ENCODE measurements at regions of chr12 and their contacts with region 1.

Region 1: GRCh38 chr12:12081836-12082497 is 11.2 kb downstream of the BCL2L14 start:
- DNase-seq: no peak
- H3K4me3 ChIP-seq: no peak overlapping the region
- H3K27ac ChIP-seq: no peak overlapping the region
- H3K4me1 ChIP-seq: no peaks in the 10 kb centered on the region
- H3K27me3 ChIP-seq: no peaks in the 10 kb centered on the region
- CTCF ChIP-seq: peak in 2 of 3 donors; percentile 15 to 34
- EP300 ChIP-seq: no peak
- POLR2A ChIP-seq: no peak

Region 2: DNA sequence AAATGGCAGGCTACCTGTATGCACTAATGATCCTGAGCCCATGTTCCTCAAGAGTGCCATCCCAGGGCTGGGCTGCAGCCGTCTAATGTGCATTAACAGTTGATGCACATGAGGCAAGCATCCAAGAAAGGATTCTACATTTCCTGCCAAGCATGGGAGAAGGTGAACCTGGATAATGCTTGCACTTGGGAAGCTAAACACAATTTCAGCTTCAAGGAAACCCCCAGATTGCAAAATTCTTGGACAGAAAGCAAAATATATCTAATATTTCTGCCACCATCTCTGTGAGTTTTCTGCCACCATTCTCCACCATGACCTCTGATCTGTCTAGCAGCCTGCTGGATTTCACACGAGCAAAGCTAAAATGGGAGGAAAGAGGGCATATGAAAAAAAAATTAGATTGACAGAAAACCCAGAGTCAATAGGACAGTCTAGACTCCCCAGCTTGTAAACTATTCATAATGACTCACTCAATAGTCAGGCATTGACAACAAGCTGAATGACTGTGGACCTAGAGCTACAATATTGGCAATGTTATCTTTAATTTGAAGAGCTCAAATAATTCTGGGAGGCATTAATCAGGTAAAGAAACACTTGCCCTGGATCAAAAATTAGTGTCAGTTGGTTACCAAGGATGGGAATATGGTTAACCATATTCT is 103.1 kb before region 1 on chr12:
- intact Hi-C with region 1: no loop called
- DNase-seq: no peak
- H3K4me3 ChIP-seq: no peak overlapping the region
- H3K27ac ChIP-seq: no peak overlapping the region
- H3K4me1 ChIP-seq: no peaks in the 10 kb centered on the region
- H3K27me3 ChIP-seq: no peaks in the 10 kb centered on the region
- CTCF ChIP-seq: no peak
- EP300 ChIP-seq: no peak
- POLR2A ChIP-seq: no peak

Region 3: DNA sequence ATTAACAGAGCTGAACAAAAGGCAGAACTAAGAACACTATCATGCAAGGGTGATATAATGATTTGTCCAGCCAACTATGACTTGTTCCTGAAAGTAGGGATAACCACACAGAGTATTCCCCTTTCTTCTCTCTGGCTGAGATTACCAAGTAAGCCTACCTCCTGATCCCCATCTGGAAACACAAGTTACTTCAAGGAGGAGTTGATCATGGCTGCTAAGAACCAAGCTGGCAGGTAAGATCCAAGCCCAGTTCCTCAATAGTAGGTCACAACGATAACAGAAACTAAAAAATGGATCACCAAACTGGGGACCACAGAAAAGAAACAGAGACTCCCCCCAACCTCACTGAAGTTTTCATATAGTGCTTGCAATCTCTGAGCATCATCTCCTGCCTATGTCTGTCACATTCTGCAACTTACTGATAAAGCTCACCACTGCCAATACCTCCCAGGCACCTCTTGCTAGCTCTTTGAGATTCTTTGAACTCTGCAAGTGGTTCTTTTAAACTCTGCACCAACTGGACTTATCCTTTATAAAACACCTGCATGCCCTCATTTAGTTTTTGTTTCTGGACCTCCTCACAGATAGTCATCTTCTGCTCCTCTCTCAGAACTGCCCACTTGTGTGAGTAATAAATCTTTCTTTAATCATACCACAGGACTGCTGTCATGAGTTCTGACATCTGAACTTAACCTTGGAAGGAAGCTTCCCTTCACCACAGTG is 108.3 kb after region 1 on chr12:
- intact Hi-C with region 1: no loop called
- DNase-seq: no peak
- H3K4me3 ChIP-seq: no peak overlapping the region
- H3K27ac ChIP-seq: no peak overlapping the region
- H3K4me1 ChIP-seq: peaks cover 1% of the 10 kb centered on the region
- H3K27me3 ChIP-seq: no peaks in the 10 kb centered on the region
- CTCF ChIP-seq: no peak
- EP300 ChIP-seq: no peak
- POLR2A ChIP-seq: no peak

Region 4: GRCh38 chr12:12327802-12328201 is 245.8 kb after region 1 on chr12:
- intact Hi-C with region 1: loop called in 2 of 4 experiments (anchors 5 to 10 kb)
- DNase-seq: no peak
- H3K4me3 ChIP-seq: no peak overlapping the region
- H3K27ac ChIP-seq: no peak overlapping the region
- H3K4me1 ChIP-seq: no peaks in the 10 kb centered on the region
- H3K27me3 ChIP-seq: no peaks in the 10 kb centered on the region
- CTCF ChIP-seq: peak; percentile 46 to 61 (median 58)
- EP300 ChIP-seq: no peak
- POLR2A ChIP-seq: no peak

Region 5: DNA sequence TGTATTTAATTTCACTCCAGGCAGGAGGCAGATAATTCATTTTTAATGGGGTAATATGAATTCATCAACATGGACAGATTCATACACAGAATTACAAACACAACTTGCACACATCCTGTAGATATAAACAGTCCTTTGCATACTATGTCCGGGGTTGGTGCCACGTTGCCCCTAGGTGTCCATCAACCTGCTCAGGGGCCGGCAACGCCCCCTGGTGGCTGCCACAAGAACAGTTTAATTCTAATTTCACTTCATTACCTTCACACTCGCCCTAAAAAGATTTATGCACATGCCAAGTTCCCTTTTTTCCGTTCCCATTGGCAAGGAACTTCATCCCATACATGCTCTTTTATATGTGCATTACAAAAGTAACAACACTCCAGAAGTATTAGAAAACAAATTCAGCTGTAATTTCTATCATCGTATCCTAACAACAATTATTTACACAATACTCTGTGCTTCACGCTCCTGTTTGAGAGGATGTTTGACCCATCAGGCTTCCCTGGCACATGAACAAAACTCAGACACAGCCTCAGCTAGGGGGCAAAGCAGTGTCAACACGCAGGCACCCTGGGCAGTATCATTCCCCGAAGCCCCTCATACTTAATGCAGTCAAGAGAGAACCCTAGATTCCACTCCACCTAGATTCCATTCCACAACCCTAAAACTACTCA is 252.5 kb after region 1 on chr12:
- intact Hi-C with region 1: loop called in 2 of 4 experiments (anchors 5 to 10 kb)
- DNase-seq: peak in 4 of 5 donors; percentile 35 to 50 (median 42)
- H3K4me3 ChIP-seq: no peak overlapping the region
- H3K27ac ChIP-seq: no peak overlapping the region
- H3K4me1 ChIP-seq: peaks cover 4% of the 10 kb centered on the region
- H3K27me3 ChIP-seq: no peaks in the 10 kb centered on the region
- CTCF ChIP-seq: peak in 2 of 3 donors; percentile 41 to 48
- EP300 ChIP-seq: no peak
- POLR2A ChIP-seq: no peak

Measured in ovary (tissue), 10 donors.